ENCODE measurements at regions of chr15 and their contacts with region 1.

Region 1: GRCh38 chr15:100033140-100033857 is 300.1 kb upstream of the LYSMD4 start:
- DNase-seq: no peak
- ATAC-seq: peak in 3 of 4 donors; percentile 17 to 46 (median 32)
- H3K4me3 ChIP-seq: no peak overlapping the region
- H3K27ac ChIP-seq: peak overlapping the region; percentile 15
- H3K4me1 ChIP-seq: peaks cover 4% of the 10 kb centered on the region
- H3K27me3 ChIP-seq: no peaks in the 10 kb centered on the region
- CTCF ChIP-seq: no peak

Region 2: DNA sequence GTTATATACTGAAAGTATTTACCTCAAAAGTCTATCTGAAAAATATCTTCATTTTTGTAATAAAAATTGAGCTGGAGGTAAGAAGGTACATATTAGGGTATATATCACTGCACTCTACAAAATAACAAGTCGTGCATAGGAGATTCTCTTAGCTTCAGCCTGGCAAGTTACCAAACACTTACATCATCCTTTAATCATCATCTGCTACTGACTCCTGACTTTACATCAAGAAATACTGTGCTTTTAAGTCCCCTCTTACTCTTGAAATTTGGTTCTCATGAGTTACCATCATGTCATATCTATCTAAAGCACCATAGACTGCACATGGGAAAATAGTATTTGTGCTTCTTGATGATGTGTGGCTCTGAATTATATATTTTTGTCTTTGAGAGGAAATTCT is 350.8 kb before region 1 on chr15:
- intact Hi-C with region 1: no loop called
- DNase-seq: no peak
- ATAC-seq: peak; percentile 40 to 64 (median 50)
- H3K4me3 ChIP-seq: no peak overlapping the region
- H3K27ac ChIP-seq: peak overlapping the region; percentile 62
- H3K4me1 ChIP-seq: no peaks in the 10 kb centered on the region
- H3K27me3 ChIP-seq: no peaks in the 10 kb centered on the region
- CTCF ChIP-seq: no peak

Region 3: DNA sequence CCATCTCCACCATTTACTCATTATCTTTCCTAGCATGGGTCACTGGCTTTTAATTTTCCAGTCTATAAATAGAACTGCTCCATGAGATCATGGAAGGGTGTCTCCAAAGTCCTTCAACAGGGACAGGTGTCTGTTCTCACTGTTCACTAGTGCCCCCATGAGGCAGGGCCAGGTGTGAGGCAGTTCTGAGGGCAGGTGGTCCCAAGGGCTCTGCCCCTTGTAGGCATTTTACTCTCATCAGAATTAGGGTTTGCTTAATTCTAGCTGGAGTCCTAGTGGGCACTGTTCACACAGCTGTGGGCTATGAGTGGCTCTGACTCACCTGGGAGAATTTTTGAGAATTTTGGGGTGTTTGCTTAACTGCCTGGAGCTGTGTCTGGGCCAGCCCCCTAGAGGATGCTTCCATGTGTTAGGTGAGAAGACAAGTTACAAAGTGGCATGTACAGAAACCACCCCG is 52.1 kb before region 1 on chr15:
- intact Hi-C with region 1: loop called in 1 of 2 experiments (anchors 5 kb)
- DNase-seq: peak in 1 of 2 donors; percentile 31
- ATAC-seq: peak; percentile 36 to 73 (median 67)
- H3K4me3 ChIP-seq: no peak overlapping the region
- H3K27ac ChIP-seq: no peak overlapping the region
- H3K4me1 ChIP-seq: no peaks in the 10 kb centered on the region
- H3K27me3 ChIP-seq: no peaks in the 10 kb centered on the region
- CTCF ChIP-seq: peak; percentile 43

Measured in psoas muscle (tissue), 8 donors.